HCT116 (cell line): ENCODE measurements at regions of chr19 and their contacts with region 1.

Region 1: DNA sequence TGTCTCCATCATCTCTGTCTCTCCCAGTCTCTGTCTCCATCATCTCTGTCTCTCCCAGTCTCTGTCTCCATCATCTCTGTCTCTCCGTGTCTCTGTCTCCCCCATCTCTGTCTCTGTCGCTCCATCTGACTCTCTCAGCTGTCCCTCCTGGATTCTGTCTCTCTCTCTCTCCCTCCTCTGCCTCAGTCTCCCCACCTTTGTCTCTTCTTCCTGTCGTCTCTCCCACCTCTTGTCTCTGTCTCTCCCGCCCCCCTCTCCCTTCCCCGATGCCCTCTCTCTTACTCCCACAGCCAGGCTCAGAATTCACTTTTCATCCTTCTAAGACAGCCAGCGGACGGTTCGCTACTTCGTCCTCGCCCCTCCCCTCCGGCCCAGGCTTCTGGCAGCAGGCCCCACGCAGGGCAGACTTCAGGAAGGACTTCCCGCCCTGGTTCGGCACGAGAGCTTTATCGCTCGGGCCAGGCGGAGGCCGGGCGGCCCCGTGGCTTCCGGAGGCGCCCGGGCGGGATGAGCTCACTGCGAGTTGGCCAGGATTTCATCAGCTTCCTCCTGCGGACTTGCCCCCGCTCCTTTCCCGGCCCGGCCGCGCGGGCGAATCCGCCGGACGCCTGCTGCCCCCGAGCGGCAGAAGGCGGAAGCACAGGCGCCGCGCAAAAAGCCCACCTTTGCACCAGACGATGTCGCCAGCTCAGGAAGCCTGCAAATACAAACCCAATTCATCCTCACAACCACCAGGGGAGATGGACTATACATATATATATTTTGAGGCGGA is 12.4 kb upstream of the CCDC9 start:
- DNase-seq: peak; percentile 85
- ATAC-seq: peak; percentile 80
- H3K4me3 ChIP-seq: peak overlapping the region; percentile 52 to 56
- H3K27ac ChIP-seq: peak overlapping the region; percentile 90
- H3K4me1 ChIP-seq: peaks cover 32 to 50% of the 10 kb centered on the region in 2 experiments
- H3K27me3 ChIP-seq: no peaks in the 10 kb centered on the region
- CTCF ChIP-seq: peak; percentile 87 to 97 (median 97)
- POLR2A ChIP-seq: no peak
- RAD21 ChIP-seq: peak; percentile 99

Region 2: GRCh38 chr19:47075179-47075810 is 168.7 kb before region 1 on chr19:
- CTCF ChIA-PET with region 1: interaction called, 11 read pairs
- POLR2A ChIA-PET with region 1: interaction called, 3 read pairs
- RAD21 ChIA-PET with region 1: no interaction called
- intact Hi-C with region 1: loop called (anchors 1 kb)
- DNase-seq: no peak
- ATAC-seq: no peak
- H3K4me3 ChIP-seq: no peak overlapping the region
- H3K27ac ChIP-seq: no peak overlapping the region
- H3K4me1 ChIP-seq: peaks cover 0 to 11% of the 10 kb centered on the region in 2 experiments; a peak in 3 of 4 replicates
- H3K27me3 ChIP-seq: no peaks in the 10 kb centered on the region
- CTCF ChIP-seq: no peak
- POLR2A ChIP-seq: no peak
- RAD21 ChIP-seq: no peak

Region 3: DNA sequence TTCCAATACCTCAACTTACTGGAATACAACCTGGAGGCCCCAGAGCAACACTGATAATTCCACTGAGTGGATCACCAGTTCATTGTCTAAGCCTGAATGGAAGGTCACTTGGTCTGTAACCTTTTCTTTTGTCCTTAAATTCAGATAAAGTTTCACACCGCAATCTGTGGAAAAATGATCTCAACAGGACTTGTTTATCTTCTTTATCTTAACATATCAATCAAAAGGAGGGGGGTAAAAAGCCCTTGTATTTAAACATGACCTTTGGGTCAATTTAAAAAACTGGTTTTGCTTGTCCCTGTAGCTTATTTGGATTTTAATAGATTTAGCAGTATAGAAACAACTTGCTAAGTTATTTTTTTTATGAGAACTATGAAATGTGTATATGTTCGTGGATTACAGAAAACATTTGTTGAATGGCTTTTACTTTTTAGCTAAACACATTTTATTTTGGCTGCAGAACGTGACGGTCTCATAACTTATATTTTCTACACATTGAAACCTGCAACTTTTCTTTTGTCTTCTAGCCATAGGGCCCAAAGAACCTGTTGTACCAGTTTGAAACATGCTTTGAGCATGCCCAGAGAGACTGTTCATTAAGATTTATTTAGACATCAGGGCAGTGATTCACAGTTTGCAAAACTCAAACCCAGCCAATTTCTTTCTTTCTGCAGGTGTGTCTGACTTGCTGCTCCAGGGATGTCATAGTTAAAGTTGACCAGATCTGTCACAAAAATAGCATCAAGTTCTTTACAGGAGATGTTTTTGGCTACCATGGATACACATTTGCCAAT is 91.5 kb before region 1 on chr19:
- CTCF ChIA-PET with region 1: interaction called, 25 read pairs
- POLR2A ChIA-PET with region 1: interaction called, 13 read pairs
- RAD21 ChIA-PET with region 1: interaction called, 3 to 4 read pairs
- intact Hi-C with region 1: loop called (anchors 1 kb)
- DNase-seq: no peak
- ATAC-seq: no peak
- H3K4me3 ChIP-seq: no peak overlapping the region
- H3K27ac ChIP-seq: peak overlapping the region; percentile 31
- H3K4me1 ChIP-seq: peaks cover 15 to 32% of the 10 kb centered on the region in 2 experiments; a peak in 3 of 4 replicates
- H3K27me3 ChIP-seq: no peaks in the 10 kb centered on the region
- CTCF ChIP-seq: no peak
- POLR2A ChIP-seq: no peak
- RAD21 ChIP-seq: no peak

Region 4: GRCh38 chr19:47225746-47226425 is 18.1 kb before region 1 on chr19:
- CTCF ChIA-PET with region 1: interaction called, 16 read pairs
- POLR2A ChIA-PET with region 1: interaction called, 34 read pairs
- RAD21 ChIA-PET with region 1: interaction called, 3 read pairs
- intact Hi-C with region 1: no loop called
- DNase-seq: no peak
- ATAC-seq: peak; percentile 58
- H3K4me3 ChIP-seq: peak overlapping the region; percentile 76 to 78
- H3K27ac ChIP-seq: peak overlapping the region; percentile 97
- H3K4me1 ChIP-seq: peaks cover 17 to 52% of the 10 kb centered on the region in 2 experiments
- H3K27me3 ChIP-seq: no peaks in the 10 kb centered on the region
- CTCF ChIP-seq: no peak
- POLR2A ChIP-seq: peak; percentile 99
- RAD21 ChIP-seq: no peak